MCF 10A (cell line): ENCODE measurements at regions of chr6 and their contacts with region 1.

Region 1: GRCh38 chr6:42901536-42901957 is 14.3 kb upstream of the PTCRA start:
- DNase-seq: peak; percentile 92
- H3K4me3 Mint-ChIP-seq: no peak overlapping the region
- H3K27ac Mint-ChIP-seq: no peak overlapping the region
- H3K4me1 Mint-ChIP-seq: peaks cover 14% of the 10 kb centered on the region
- H3K27me3 Mint-ChIP-seq: no peaks in the 10 kb centered on the region
- CTCF ChIP-seq: peak; percentile 89

Region 2: GRCh38 chr6:42890311-42891198 is 11.0 kb before region 1 on chr6:
- CTCF ChIA-PET with region 1: interaction called, 6 read pairs
- POLR2A ChIA-PET with region 1: interaction called, 23 read pairs
- intact Hi-C with region 1: no loop called
- DNase-seq: peak; percentile 98
- H3K4me3 Mint-ChIP-seq: peak overlapping the region; percentile 89
- H3K27ac Mint-ChIP-seq: peak overlapping the region; percentile 80
- H3K4me1 Mint-ChIP-seq: no peaks in the 10 kb centered on the region
- H3K27me3 Mint-ChIP-seq: no peaks in the 10 kb centered on the region
- CTCF ChIP-seq: no peak

Region 3: GRCh38 chr6:42978839-42979522 is 77.4 kb after region 1 on chr6 and contains the start of gene PEX6:
- CTCF ChIA-PET with region 1: interaction called, 5 read pairs
- POLR2A ChIA-PET with region 1: interaction called, 16 read pairs
- intact Hi-C with region 1: no loop called
- DNase-seq: peak; percentile 91
- H3K4me3 Mint-ChIP-seq: peak within 1 kb of the TSS; percentile 87
- H3K27ac Mint-ChIP-seq: peak within 1 kb of the TSS; percentile 91
- H3K4me1 Mint-ChIP-seq: peaks cover 15% of the 10 kb centered on the region
- H3K27me3 Mint-ChIP-seq: no peaks in the 10 kb centered on the region
- CTCF ChIP-seq: no peak
- total RNA-seq, gene PEX6: 25.8 and 34.0 TPM in 2 replicates

Region 4: GRCh38 chr6:43070028-43070632 is 168.6 kb after region 1 on chr6:
- CTCF ChIA-PET with region 1: no interaction called
- POLR2A ChIA-PET with region 1: no interaction called
- intact Hi-C with region 1: loop called (anchors 1 kb)
- DNase-seq: peak; percentile 65
- H3K4me3 Mint-ChIP-seq: no peak overlapping the region
- H3K27ac Mint-ChIP-seq: peak overlapping the region; percentile 75
- H3K4me1 Mint-ChIP-seq: no peaks in the 10 kb centered on the region
- H3K27me3 Mint-ChIP-seq: no peaks in the 10 kb centered on the region
- CTCF ChIP-seq: peak; percentile 62

Region 5: GRCh38 chr6:43334466-43335095 is 433.0 kb after region 1 on chr6:
- CTCF ChIA-PET with region 1: interaction called, 7 read pairs
- POLR2A ChIA-PET with region 1: no interaction called
- intact Hi-C with region 1: loop called (anchors 1 kb)
- DNase-seq: peak; percentile 72
- H3K4me3 Mint-ChIP-seq: no peak overlapping the region
- H3K27ac Mint-ChIP-seq: no peak overlapping the region
- H3K4me1 Mint-ChIP-seq: no peaks in the 10 kb centered on the region
- H3K27me3 Mint-ChIP-seq: no peaks in the 10 kb centered on the region
- CTCF ChIP-seq: peak; percentile 44